ENCODE measurements at regions of chr12 and their contacts with region 1.

Region 1: GRCh38 chr12:50111693-50112455 is at the start of gene COX14:
- DNase-seq: peak; percentile 98 to 100 (median 100)
- H3K4me3 ChIP-seq: peak within 1 kb of the TSS; percentile 98 to 99
- H3K4me3 Mint-ChIP-seq: peak within 1 kb of the TSS; percentile 93 to 100 (median 96)
- H3K27ac ChIP-seq: peak within 1 kb of the TSS; percentile 93
- H3K27ac Mint-ChIP-seq: peak within 1 kb of the TSS; percentile 93 to 100 (median 98)
- H3K4me1 ChIP-seq: peaks cover 43% of the 10 kb centered on the region
- H3K4me1 Mint-ChIP-seq: peaks cover 18 to 50% (median 35%) of the 10 kb centered on the region in 4 donors
- H3K27me3 ChIP-seq: no peaks in the 10 kb centered on the region
- H3K27me3 Mint-ChIP-seq: peaks cover 0 to 1% of the 10 kb centered on the region in 2 donors
- total RNA-seq, gene COX14: 53.3 to 61.6 TPM

Region 2: DNA sequence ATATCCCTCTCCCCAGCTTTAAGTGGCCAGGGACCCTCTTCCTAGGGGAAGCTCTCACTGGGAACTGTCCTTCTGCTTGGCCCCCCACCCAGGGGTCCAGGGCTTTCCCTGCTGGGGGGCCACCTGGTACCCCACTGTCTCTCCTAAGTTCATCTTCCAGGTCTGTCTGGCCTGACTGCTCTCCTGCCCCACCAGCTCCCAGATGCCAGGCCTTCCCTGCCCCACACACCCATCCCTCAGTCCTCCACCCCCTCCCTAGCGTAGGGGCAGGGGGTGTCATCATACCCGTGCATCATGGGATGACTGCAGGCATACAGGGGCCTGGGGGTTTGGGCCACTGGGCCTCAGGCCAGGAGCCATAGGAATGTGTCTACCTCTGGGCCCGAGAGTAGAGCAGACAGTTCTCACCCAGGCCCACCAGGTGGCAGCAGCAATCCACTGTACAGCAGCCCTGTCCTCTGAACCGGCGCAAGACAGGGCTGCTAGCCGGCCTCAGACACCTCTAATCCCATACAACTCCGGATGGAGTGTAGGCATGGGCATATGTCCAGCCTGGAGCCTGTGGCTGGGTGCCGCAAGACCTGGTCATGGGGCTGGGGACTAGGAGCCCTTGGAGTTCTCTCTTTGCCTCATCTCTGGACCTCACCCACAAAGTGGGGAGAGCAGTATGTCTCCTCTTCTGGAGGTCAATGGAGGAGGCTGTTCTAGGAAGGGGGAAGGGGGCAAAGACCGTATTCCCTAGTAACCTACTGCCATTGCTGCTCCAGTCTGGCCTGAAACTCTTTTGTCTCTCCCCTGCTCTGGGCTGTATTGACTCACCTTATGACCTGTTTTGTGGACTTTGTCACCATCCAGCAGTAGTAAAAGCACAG is 36.7 kb before region 1 on chr12:
- CTCF ChIA-PET with region 1: interaction called, 30 read pairs
- POLR2A ChIA-PET with region 1: no interaction called
- intact Hi-C with region 1: no loop called
- DNase-seq: peak; percentile 67 to 77 (median 72)
- H3K4me3 ChIP-seq: no peak overlapping the region
- H3K4me3 Mint-ChIP-seq: no peak overlapping the region
- H3K27ac ChIP-seq: no peak overlapping the region
- H3K27ac Mint-ChIP-seq: peak overlapping the region in 2 of 7 donors; percentile 64 to 79
- H3K4me1 ChIP-seq: peaks cover 3% of the 10 kb centered on the region
- H3K4me1 Mint-ChIP-seq: peaks cover 5 to 11% (median 7%) of the 10 kb centered on the region in 4 donors
- H3K27me3 ChIP-seq: no peaks in the 10 kb centered on the region
- H3K27me3 Mint-ChIP-seq: peaks cover 0 to 5% of the 10 kb centered on the region in 2 donors

Region 3: DNA sequence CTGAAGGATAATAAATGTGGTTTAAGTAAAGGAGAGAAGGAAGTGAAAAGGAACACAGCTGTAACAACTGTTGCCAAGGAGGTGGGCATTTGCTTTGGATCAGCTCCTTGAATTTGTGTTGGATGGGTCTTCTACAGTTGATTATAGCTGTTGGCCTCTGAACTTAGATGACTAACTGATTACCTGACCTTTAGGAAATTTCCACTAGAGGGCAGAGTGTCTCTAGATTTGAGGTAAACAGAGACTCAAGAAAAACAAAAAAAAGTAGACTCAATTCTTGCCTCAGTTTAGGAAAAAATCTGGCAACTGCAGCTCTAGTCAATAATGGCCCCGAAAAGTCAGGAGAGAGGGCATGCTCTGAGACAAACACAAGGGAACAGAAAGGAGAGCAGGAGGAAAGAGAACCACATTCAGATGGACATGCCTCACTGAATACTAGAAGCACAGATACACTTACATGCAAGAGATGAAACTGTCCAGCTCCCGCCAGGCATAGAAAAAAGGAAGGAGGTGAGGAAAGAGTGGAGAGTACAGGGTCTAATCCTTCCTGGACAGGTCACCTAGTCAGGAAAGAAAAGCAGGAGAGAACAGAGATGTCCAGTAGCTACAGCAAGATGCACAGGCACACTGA is 20.7 kb after region 1 on chr12:
- CTCF ChIA-PET with region 1: interaction called, 58 read pairs
- POLR2A ChIA-PET with region 1: interaction called, 28 read pairs
- intact Hi-C with region 1: loop called (anchors 2 kb)
- DNase-seq: peak in 4 of 5 donors; percentile 48 to 54 (median 52)
- H3K4me3 ChIP-seq: no peak overlapping the region
- H3K4me3 Mint-ChIP-seq: no peak overlapping the region
- H3K27ac ChIP-seq: no peak overlapping the region
- H3K27ac Mint-ChIP-seq: peak overlapping the region in 6 of 7 donors; percentile 14 to 84 (median 68)
- H3K4me1 ChIP-seq: no peaks in the 10 kb centered on the region
- H3K4me1 Mint-ChIP-seq: peaks cover 12 to 28% (median 13%) of the 10 kb centered on the region in 4 donors
- H3K27me3 ChIP-seq: no peaks in the 10 kb centered on the region
- H3K27me3 Mint-ChIP-seq: no peaks in the 10 kb centered on the region

Region 4: GRCh38 chr12:50174971-50175715 is 63.3 kb after region 1 on chr12:
- CTCF ChIA-PET with region 1: interaction called, 131 read pairs
- POLR2A ChIA-PET with region 1: interaction called, 6 read pairs
- intact Hi-C with region 1: loop called (anchors 1 kb)
- DNase-seq: peak; percentile 44 to 71 (median 64)
- H3K4me3 ChIP-seq: no peak overlapping the region
- H3K4me3 Mint-ChIP-seq: no peak overlapping the region
- H3K27ac ChIP-seq: no peak overlapping the region
- H3K27ac Mint-ChIP-seq: peak overlapping the region in 2 of 7 donors; percentile 13 to 49
- H3K4me1 ChIP-seq: no peaks in the 10 kb centered on the region
- H3K4me1 Mint-ChIP-seq: peaks cover 0 to 2% (median 0%) of the 10 kb centered on the region in 4 donors
- H3K27me3 ChIP-seq: no peaks in the 10 kb centered on the region
- H3K27me3 Mint-ChIP-seq: no peaks in the 10 kb centered on the region

Region 5: DNA sequence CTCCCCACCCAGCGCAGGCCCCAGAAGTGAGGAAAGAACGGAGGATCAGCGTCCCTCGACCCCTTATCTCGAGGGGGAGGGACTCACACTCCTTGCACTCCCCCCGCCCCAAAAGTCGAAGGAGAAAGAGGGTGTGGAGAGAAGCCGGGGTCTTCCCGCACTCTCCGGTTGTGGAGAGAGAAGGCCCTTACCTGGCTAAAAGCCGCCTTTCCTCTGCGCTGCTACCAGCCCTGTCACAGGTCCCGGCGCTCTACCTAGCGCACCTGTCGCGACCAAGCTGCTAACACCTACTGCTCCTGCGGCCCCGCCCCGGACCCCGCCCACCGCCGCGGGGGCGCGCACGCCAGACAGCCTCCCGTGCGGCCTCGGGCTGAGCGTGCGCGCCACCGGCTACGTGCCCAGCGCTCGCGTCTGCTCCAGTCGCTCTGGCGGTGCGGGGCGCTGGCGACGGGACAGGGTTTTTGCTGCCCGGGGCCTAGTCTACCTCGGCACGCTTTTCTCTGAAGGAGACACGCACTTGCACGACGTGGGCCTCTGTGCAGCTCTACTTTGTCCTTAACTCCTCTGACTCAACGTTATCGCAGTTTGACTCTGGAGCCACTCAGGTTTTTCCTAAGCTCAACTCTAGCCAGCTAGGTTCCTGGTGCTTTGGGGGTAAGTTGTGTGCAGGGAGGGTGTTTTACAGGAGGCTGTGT is 171.5 kb after region 1 on chr12 and contains the start of gene LIMA1:
- CTCF ChIA-PET with region 1: interaction called, 17 read pairs
- POLR2A ChIA-PET with region 1: interaction called, 17 read pairs
- intact Hi-C with region 1: loop called (anchors 1 kb)
- DNase-seq: peak; percentile 91 to 93 (median 91)
- H3K4me3 ChIP-seq: peak within 1 kb of the TSS; percentile 58 to 61
- H3K4me3 Mint-ChIP-seq: peak within 1 kb of the TSS; percentile 91 to 96 (median 92)
- H3K27ac ChIP-seq: peak within 1 kb of the TSS; percentile 70
- H3K27ac Mint-ChIP-seq: peak within 1 kb of the TSS; percentile 38 to 95 (median 87)
- H3K4me1 ChIP-seq: peaks cover 17% of the 10 kb centered on the region
- H3K4me1 Mint-ChIP-seq: peaks cover 9 to 18% (median 14%) of the 10 kb centered on the region in 4 donors
- H3K27me3 ChIP-seq: no peaks in the 10 kb centered on the region
- H3K27me3 Mint-ChIP-seq: no peaks in the 10 kb centered on the region
- total RNA-seq, gene LIMA1: 11.5 to 14.9 TPM

Measured in CD4-positive, alpha-beta memory T cell (primary cell).